ENCODE measurements at regions of chr18 and their contacts with region 1.

Region 1: GRCh38 chr18:5851998-5852397 is 43.3 kb downstream of the TMEM200C start:
- DNase-seq: no peak
- H3K4me3 ChIP-seq: no peak overlapping the region
- H3K27ac ChIP-seq: no peak overlapping the region
- H3K4me1 ChIP-seq: no peaks in the 10 kb centered on the region
- CTCF ChIP-seq: peak; percentile 45

Region 2: GRCh38 chr18:5475267-5475666 is 376.7 kb before region 1 on chr18:
- CTCF ChIA-PET with region 1: no interaction called
- POLR2A ChIA-PET with region 1: no interaction called
- intact Hi-C with region 1: no loop called
- DNase-seq: no peak
- H3K4me3 ChIP-seq: no peak overlapping the region
- H3K27ac ChIP-seq: no peak overlapping the region
- H3K4me1 ChIP-seq: no peaks in the 10 kb centered on the region
- CTCF ChIP-seq: no peak

Region 3: GRCh38 chr18:5986260-5986931 is 134.4 kb after region 1 on chr18:
- CTCF ChIA-PET with region 1: no interaction called
- POLR2A ChIA-PET with region 1: no interaction called
- intact Hi-C with region 1: no loop called
- DNase-seq: no peak
- H3K4me3 ChIP-seq: no peak overlapping the region
- H3K27ac ChIP-seq: no peak overlapping the region
- H3K4me1 ChIP-seq: no peaks in the 10 kb centered on the region
- CTCF ChIP-seq: no peak

Region 4: DNA sequence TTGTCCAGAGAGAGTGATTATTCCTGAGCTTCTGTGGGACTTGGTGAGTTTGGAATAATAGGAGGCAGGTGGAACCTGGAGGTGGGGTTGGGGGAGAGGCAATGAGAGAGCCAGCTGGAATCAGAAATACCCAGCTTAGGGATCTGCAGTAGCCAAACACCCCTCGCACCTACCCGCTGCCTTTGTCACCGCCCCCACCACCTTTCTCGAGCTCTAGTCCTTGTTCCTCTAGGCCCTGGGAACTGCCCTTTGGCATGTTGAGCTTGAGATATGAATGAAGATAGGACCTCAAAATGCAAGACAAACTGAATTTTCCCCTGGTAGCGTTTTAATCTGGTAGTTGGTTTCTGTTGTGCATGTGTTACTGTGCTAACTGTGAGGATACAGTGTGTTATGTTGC is 1958.0 kb after region 1 on chr18:
- CTCF ChIA-PET with region 1: no interaction called
- POLR2A ChIA-PET with region 1: interaction called, 10 read pairs
- intact Hi-C with region 1: no loop called
- DNase-seq: no peak
- H3K4me3 ChIP-seq: no peak overlapping the region
- H3K27ac ChIP-seq: no peak overlapping the region
- H3K4me1 ChIP-seq: no peaks in the 10 kb centered on the region
- CTCF ChIP-seq: no peak

Measured in OCI-LY7 (cell line).